K562 (cell line): ENCODE measurements at regions of chr21 and their contacts with region 1.

Region 1: GRCh38 chr21:44089001-44089911 is 17.9 kb upstream of the PWP2 start:
- DNase-seq: no peak
- ATAC-seq: no peak
- H3K4me3 ChIP-seq: no peak overlapping the region
- H3K27ac ChIP-seq: no peak overlapping the region
- H3K4me1 ChIP-seq: 0 out of 5 replicates have a peak, but pooled peaks cover 0 to 4% of the 10 kb centered on the region in 2 experiments
- H3K27me3 ChIP-seq: no peaks in the 10 kb centered on the region
- CTCF ChIP-seq: no peak
- EP300 ChIP-seq: no peak
- POLR2A ChIP-seq: no peak
- RAD21 ChIP-seq: no peak

Region 2: GRCh38 chr21:44078411-44078981 is 10.8 kb before region 1 on chr21:
- CTCF ChIA-PET with region 1: interaction called, 3 read pairs
- POLR2A ChIA-PET with region 1: interaction called, 11 read pairs
- in situ Hi-C with region 1: no loop called
- intact Hi-C with region 1: no loop called
- DNase-seq: no peak
- ATAC-seq: no peak
- H3K4me3 ChIP-seq: no peak overlapping the region
- H3K27ac ChIP-seq: no peak overlapping the region
- H3K4me1 ChIP-seq: peaks cover 0 to 6% of the 10 kb centered on the region in 2 experiments; a peak in 2 of 5 replicates
- H3K27me3 ChIP-seq: no peaks in the 10 kb centered on the region
- CTCF ChIP-seq: no peak
- EP300 ChIP-seq: no peak
- POLR2A ChIP-seq: no peak
- RAD21 ChIP-seq: no peak

Region 3: DNA sequence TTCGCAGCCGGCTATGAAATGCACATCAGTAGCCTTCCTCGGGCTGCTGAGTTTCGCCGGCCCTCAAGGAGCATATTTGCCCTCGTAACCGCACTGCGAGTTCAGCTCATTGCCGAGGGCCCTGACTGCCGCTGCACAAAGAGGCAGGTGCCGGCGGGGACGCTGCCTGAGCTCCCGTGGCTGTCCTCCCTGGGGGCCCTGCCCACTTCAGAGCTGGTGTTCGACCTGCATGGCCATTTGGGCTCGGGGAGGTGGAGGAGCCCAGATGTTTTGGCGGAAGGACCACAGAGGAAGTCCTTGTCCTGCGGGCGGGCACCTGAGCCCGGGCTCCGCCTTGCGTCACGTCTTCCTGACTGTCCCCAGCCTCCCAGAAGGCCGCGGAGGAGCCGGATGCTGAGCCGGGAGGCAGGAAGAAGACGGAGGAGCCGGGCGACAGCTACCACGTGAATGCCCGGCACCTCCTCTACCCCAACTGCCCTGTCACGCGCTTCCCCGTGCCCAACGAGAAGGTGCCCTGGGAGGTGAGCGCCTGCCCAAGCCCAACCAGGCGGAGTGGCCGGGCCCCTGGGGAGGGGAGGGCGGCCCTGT is 336.1 kb after region 1 on chr21:
- CTCF ChIA-PET with region 1: no interaction called
- POLR2A ChIA-PET with region 1: no interaction called
- in situ Hi-C with region 1: no loop called
- intact Hi-C with region 1: no loop called
- DNase-seq: no peak
- ATAC-seq: peak; percentile 12; the same call in 1 of the 3 replicates
- H3K4me3 ChIP-seq: no peak overlapping the region
- H3K27ac ChIP-seq: no peak overlapping the region
- H3K4me1 ChIP-seq: peaks cover 0 to 43% of the 10 kb centered on the region in 2 experiments; a peak in 2 of 5 replicates
- H3K27me3 ChIP-seq: peaks cover 9 to 34% of the 10 kb centered on the region in 2 experiments; a peak in 3 of 5 replicates
- CTCF ChIP-seq: no peak
- EP300 ChIP-seq: no peak
- POLR2A ChIP-seq: no peak
- RAD21 ChIP-seq: no peak